Gastrocnemius medialis (tissue), 4 donors: ENCODE measurements at regions of chr4 and their contacts with region 1.

Region 1: DNA sequence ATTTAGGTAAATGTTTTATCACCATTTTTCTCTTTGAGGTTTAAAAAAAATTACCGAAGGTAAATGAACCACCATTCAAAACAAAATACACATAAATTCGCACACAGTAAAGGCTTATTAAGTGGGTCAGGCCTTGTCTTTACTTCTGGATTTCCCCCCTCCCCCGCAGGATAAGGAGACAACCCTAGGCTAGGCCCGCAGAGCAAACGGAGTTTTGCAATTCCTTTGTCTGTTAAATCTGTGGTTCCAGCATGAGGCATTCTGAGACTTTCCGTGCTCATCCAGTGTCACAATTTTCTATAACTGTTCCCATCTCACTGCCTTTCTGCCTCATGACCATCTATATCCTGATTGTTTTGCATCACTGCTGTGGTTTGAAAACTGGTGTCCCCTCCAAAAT is 307.4 kb downstream of the DCHS2 start:
- DNase-seq: no peak
- ATAC-seq: no peak
- H3K4me3 ChIP-seq: no peak overlapping the region
- H3K27ac ChIP-seq: no peak overlapping the region
- H3K4me1 ChIP-seq: no peaks in the 10 kb centered on the region
- H3K27me3 ChIP-seq: no peaks in the 10 kb centered on the region
- CTCF ChIP-seq: no peak
- POLR2A ChIP-seq: no peak

Region 2: DNA sequence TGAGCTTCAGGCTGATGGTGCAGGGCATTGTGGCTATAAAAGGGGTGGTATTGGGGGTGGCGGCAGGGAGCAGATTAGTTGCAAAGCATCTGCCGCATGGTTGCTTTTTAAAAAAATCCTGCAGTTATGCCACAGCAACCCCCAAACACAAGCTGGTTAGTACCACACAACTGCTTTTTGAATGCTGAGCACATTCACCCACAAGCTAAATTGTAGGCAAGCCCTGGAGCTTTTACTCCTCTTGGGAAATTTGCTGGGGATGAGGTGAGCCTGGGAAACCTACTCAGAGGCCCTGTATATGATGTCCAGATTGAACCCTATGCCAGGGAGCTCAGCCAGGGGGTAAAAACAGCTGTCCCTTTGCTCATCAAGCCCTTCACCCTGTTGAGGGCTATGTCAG is 1013.8 kb before region 1 on chr4:
- in situ Hi-C with region 1: no loop called
- intact Hi-C with region 1: no loop called
- DNase-seq: no peak
- ATAC-seq: no peak
- H3K4me3 ChIP-seq: no peak overlapping the region
- H3K27ac ChIP-seq: no peak overlapping the region
- H3K4me1 ChIP-seq: no peaks in the 10 kb centered on the region
- H3K27me3 ChIP-seq: no peaks in the 10 kb centered on the region
- CTCF ChIP-seq: no peak
- POLR2A ChIP-seq: no peak

Region 3: DNA sequence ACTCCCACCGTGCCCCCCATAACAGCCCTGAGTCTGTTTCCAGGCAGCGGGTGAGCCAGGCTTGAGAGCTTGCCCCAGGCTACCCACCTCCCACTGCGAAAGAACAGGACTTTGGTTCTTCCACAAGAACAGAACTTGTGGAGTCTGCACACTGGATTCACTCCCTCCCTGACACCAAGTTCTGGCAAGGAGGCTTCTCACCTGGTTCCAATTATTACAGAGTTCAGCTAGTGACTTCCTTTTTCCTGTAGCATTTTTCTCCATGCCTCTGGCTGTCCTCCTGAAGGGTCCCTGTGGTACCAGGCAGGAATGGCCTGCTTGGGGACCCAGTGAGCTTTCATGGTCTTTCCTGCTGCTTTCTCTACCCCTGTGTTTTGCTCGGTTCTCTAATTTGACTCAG is 186.7 kb before region 1 on chr4:
- in situ Hi-C with region 1: no loop called
- intact Hi-C with region 1: no loop called
- DNase-seq: no peak
- ATAC-seq: no peak
- H3K4me3 ChIP-seq: no peak overlapping the region
- H3K27ac ChIP-seq: no peak overlapping the region
- H3K4me1 ChIP-seq: no peaks in the 10 kb centered on the region
- H3K27me3 ChIP-seq: no peaks in the 10 kb centered on the region
- CTCF ChIP-seq: no peak
- POLR2A ChIP-seq: no peak

Region 4: DNA sequence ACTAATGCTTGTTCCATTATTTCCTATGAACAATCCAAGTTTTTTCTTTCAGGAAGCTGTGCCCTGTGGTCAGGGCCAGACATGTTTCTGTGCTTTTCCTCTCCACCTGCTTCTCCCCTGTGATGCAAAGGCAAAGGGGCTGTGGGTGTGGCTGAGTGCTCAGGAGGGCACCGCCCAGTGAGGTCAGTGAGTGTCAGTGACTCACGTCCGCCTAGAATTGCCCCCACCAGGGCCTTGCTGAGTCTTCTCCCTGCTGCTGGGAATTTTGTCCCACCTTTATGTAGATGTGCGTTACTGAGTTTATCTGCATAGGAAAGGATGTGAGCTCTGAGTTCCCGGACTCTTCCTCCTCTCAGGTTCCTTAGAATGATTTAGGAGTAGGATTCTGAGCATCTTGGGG is 24.2 kb after region 1 on chr4:
- in situ Hi-C with region 1: no loop called
- intact Hi-C with region 1: loop called (anchors 1 kb)
- DNase-seq: no peak
- ATAC-seq: no peak
- H3K4me3 ChIP-seq: no peak overlapping the region
- H3K27ac ChIP-seq: no peak overlapping the region
- H3K4me1 ChIP-seq: no peaks in the 10 kb centered on the region
- H3K27me3 ChIP-seq: no peaks in the 10 kb centered on the region
- CTCF ChIP-seq: no peak
- POLR2A ChIP-seq: no peak

Region 5: DNA sequence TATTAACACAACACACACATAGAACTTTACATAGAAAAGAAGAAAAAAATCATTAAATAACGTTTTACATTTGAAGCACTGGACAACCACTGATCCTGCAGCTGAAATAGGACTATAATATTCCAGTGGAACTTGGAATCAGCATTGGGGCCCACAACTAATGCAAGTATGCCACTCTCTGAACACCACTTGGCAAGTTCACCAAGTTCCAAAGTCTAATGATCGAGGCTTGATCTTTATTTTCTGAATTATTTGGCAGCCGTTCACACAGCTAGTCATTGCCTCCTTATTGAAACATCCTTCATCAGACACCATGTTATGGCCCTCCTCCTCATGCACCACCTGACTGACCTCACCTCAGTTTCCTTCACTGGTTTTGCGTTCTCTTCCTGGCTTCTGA is 199.8 kb after region 1 on chr4:
- in situ Hi-C with region 1: no loop called
- intact Hi-C with region 1: no loop called
- DNase-seq: no peak
- ATAC-seq: no peak
- H3K4me3 ChIP-seq: no peak overlapping the region
- H3K27ac ChIP-seq: no peak overlapping the region
- H3K4me1 ChIP-seq: no peaks in the 10 kb centered on the region
- H3K27me3 ChIP-seq: no peaks in the 10 kb centered on the region
- CTCF ChIP-seq: no peak
- POLR2A ChIP-seq: no peak